Natural killer cell (primary cell): ENCODE measurements at regions of chr7 and their contacts with region 1.

Region 1: DNA sequence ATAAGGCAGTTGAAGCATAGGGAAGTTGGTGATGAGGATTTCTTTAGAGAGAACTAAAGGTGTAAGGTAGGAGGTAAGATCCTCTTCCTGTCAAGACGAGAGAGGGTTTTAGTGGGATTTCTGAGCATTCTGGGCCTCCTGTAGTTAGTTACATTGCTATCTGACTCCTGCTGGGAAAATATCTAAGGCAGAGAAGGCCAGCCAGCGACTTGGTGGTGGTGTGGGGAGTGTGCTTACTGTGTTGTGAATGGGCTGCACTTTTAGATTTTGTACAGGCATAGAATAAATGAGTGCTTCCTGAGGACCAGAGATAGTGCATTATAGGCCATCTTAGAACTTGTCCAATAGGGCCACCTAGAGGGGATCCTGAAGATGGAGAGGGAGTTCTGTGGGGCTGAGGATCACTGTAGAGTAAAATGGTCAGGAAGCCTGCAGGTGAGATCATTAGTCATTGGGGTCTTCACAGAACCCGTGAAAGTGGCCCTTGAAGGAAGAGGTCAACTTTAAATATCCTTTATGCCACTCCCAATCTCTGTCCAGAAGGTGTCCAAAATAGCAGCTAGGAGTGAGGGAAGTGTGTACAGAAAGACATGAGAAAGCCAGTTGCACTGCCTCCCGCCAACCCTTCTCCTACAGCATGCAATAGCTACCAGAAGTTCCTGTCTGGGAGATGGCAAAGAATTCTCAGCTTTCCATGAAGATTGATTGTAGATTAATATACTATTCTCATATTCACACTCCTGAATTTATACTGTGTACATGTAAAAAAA is 266.6 kb downstream of the POLR1F start:
- DNase-seq: no peak
- ATAC-seq: peak; percentile 52 to 80 (median 73)
- H3K4me3 ChIP-seq: no peak overlapping the region
- H3K4me3 Mint-ChIP-seq: no peak overlapping the region
- H3K27ac ChIP-seq: no peak overlapping the region
- H3K27ac Mint-ChIP-seq: no peak overlapping the region
- H3K4me1 ChIP-seq: no peaks in the 10 kb centered on the region
- H3K4me1 Mint-ChIP-seq: peaks cover 7 to 12% of the 10 kb centered on the region in 2 donors
- H3K27me3 ChIP-seq: no peaks in the 10 kb centered on the region
- H3K27me3 Mint-ChIP-seq: peaks cover 0 to 33% of the 10 kb centered on the region in 2 donors
- CTCF ChIP-seq: peak; percentile 38

Region 2: GRCh38 chr7:19121977-19122588 is 320.1 kb before region 1 on chr7:
- intact Hi-C with region 1: loop called (anchors 5 kb)
- DNase-seq: no peak
- ATAC-seq: no peak
- H3K4me3 ChIP-seq: no peak overlapping the region
- H3K4me3 Mint-ChIP-seq: no peak overlapping the region
- H3K27ac ChIP-seq: no peak overlapping the region
- H3K27ac Mint-ChIP-seq: no peak overlapping the region
- H3K4me1 ChIP-seq: peaks cover 14% of the 10 kb centered on the region
- H3K4me1 Mint-ChIP-seq: no peaks in the 10 kb centered on the region
- H3K27me3 ChIP-seq: peaks cover 38% of the 10 kb centered on the region
- H3K27me3 Mint-ChIP-seq: peaks cover 48% of the 10 kb centered on the region in 2 donors
- CTCF ChIP-seq: no peak